ENCODE measurements at regions of chr19 and their contacts with region 1.

Region 1: DNA sequence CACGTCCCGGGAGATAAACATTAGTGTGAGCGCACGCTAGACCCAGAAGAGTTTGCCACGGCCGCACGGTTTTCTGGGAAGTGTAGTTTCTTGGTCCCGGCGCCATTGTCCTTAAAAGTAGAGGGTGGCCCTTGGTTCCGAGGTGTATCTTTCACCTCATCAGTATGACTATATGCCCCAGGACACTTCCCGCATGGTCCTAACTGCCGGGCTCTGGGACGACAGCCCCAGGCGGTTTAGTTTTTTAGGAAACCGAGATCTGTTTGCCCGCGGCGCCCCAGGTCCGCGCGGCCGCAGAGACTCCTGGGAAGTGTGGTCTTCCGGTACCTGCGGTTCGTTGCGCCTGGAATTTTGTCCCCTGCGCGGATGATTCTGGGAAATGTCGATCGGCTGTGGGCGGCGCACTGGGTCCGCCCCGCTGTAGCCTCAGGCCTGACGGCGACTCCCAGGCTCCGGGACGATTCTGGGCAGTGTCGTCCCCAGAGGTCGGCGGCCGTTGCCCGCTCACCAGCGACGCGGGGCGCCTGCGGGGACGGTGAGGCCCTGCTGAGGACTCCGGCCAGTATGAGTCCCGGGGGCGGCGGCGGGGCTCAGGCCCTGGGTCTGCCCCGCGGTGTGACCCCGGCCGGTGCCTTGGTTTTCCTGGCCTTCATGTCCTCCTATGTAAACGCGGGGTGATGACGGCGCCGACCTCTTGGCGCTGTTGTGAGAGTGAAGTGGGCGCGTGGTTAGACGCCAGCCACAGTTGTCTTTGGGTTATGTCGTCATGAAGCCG is at the start of gene ZNF181:
- DNase-seq: peak; percentile 74 to 86 (median 78)
- H3K4me3 ChIP-seq: peak within 1 kb of the TSS; percentile 81 to 94 (median 83)
- H3K4me3 Mint-ChIP-seq: peak within 1 kb of the TSS; percentile 91 to 93
- H3K27ac ChIP-seq: peak within 1 kb of the TSS; percentile 74 to 87
- H3K27ac Mint-ChIP-seq: peak within 1 kb of the TSS; percentile 93 to 97 (median 96)
- H3K4me1 ChIP-seq: peaks cover 16 to 24% of the 10 kb centered on the region in 2 donors
- H3K4me1 Mint-ChIP-seq: peaks cover 14% of the 10 kb centered on the region
- H3K27me3 ChIP-seq: no peaks in the 10 kb centered on the region
- H3K27me3 Mint-ChIP-seq: peaks cover 0 to 3% (median 1%) of the 10 kb centered on the region in 3 donors
- CTCF ChIP-seq: no peak
- polyA plus RNA-seq, gene ZNF181: 2.3 to 5.7 (median 3.0) TPM

Region 2: GRCh38 chr19:34772697-34773554 is 38.9 kb after region 1 on chr19 and contains the start of gene ZNF599:
- intact Hi-C with region 1: loop called in 1 of 2 experiments (anchors 5 kb)
- DNase-seq: peak; percentile 66 to 85 (median 72)
- H3K4me3 ChIP-seq: peak within 1 kb of the TSS; percentile 65 to 74 (median 71)
- H3K4me3 Mint-ChIP-seq: peak within 1 kb of the TSS; percentile 83 to 90
- H3K27ac ChIP-seq: no peak within 1 kb of the TSS
- H3K27ac Mint-ChIP-seq: peak within 1 kb of the TSS in 4 of 7 donors; percentile 7 to 71 (median 66)
- H3K4me1 ChIP-seq: peaks cover 11 to 13% of the 10 kb centered on the region in 2 donors
- H3K4me1 Mint-ChIP-seq: peaks cover 12% of the 10 kb centered on the region
- H3K27me3 ChIP-seq: peaks cover 0 to 2% of the 10 kb centered on the region in 2 donors
- H3K27me3 Mint-ChIP-seq: peaks cover 5 to 7% (median 5%) of the 10 kb centered on the region in 3 donors
- CTCF ChIP-seq: no peak
- polyA plus RNA-seq, gene ZNF599: 0.85 to 0.99 (median 0.91) TPM

Region 3: DNA sequence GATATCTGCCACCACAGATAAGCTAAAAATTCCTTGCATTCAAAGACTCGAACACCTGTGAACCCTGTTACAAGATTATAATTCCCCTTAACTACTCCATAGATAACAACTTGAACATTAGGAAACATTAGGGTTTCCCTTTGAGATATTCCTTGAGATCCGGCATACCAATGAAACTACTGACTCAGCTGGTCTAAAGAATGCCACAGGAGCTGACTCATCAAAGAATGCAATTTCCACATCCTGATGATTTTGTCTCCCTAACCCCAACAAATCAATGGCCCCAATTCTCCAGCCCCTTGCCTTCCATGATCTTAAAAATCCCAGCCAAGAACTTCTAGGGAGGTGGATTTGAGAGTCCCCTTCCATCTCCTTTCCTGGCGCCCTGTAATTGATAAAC is 74.6 kb after region 1 on chr19:
- intact Hi-C with region 1: no loop called
- DNase-seq: no peak
- H3K4me3 ChIP-seq: no peak overlapping the region
- H3K4me3 Mint-ChIP-seq: no peak overlapping the region
- H3K27ac ChIP-seq: no peak overlapping the region
- H3K27ac Mint-ChIP-seq: no peak overlapping the region
- H3K4me1 ChIP-seq: no peaks in the 10 kb centered on the region
- H3K4me1 Mint-ChIP-seq: no peaks in the 10 kb centered on the region
- H3K27me3 ChIP-seq: no peaks in the 10 kb centered on the region
- H3K27me3 Mint-ChIP-seq: peaks cover 0 to 2% (median 2%) of the 10 kb centered on the region in 3 donors
- CTCF ChIP-seq: no peak

Measured in CD14-positive monocyte (primary cell).